CD8-positive, alpha-beta T cell (primary cell): ENCODE measurements at regions of chr11 and their contacts with region 1.

Region 1: GRCh38 chr11:19561011-19561410 is 151.6 kb upstream of the NAV2 start:
- DNase-seq: no peak
- ATAC-seq: no peak
- H3K4me3 ChIP-seq: no peak overlapping the region
- H3K4me3 Mint-ChIP-seq: no peak overlapping the region
- H3K27ac ChIP-seq: no peak overlapping the region
- H3K27ac Mint-ChIP-seq: no peak overlapping the region
- H3K4me1 ChIP-seq: no peaks in the 10 kb centered on the region
- H3K4me1 Mint-ChIP-seq: peaks cover 4% of the 10 kb centered on the region
- H3K27me3 ChIP-seq: no peaks in the 10 kb centered on the region
- H3K27me3 Mint-ChIP-seq: peaks cover 13% of the 10 kb centered on the region
- CTCF ChIP-seq: no peak

Region 2: GRCh38 chr11:19573666-19574065 is 12.7 kb after region 1 on chr11:
- CTCF ChIA-PET with region 1: interaction called, 26 read pairs
- POLR2A ChIA-PET with region 1: no interaction called
- intact Hi-C with region 1: no loop called
- DNase-seq: no peak
- ATAC-seq: no peak
- H3K4me3 ChIP-seq: no peak overlapping the region
- H3K4me3 Mint-ChIP-seq: no peak overlapping the region
- H3K27ac ChIP-seq: no peak overlapping the region
- H3K27ac Mint-ChIP-seq: no peak overlapping the region
- H3K4me1 ChIP-seq: no peaks in the 10 kb centered on the region
- H3K4me1 Mint-ChIP-seq: no peaks in the 10 kb centered on the region
- H3K27me3 ChIP-seq: peaks cover 0 to 3% of the 10 kb centered on the region in 2 experiments
- H3K27me3 Mint-ChIP-seq: peaks cover 8% of the 10 kb centered on the region
- CTCF ChIP-seq: no peak

Region 3: DNA sequence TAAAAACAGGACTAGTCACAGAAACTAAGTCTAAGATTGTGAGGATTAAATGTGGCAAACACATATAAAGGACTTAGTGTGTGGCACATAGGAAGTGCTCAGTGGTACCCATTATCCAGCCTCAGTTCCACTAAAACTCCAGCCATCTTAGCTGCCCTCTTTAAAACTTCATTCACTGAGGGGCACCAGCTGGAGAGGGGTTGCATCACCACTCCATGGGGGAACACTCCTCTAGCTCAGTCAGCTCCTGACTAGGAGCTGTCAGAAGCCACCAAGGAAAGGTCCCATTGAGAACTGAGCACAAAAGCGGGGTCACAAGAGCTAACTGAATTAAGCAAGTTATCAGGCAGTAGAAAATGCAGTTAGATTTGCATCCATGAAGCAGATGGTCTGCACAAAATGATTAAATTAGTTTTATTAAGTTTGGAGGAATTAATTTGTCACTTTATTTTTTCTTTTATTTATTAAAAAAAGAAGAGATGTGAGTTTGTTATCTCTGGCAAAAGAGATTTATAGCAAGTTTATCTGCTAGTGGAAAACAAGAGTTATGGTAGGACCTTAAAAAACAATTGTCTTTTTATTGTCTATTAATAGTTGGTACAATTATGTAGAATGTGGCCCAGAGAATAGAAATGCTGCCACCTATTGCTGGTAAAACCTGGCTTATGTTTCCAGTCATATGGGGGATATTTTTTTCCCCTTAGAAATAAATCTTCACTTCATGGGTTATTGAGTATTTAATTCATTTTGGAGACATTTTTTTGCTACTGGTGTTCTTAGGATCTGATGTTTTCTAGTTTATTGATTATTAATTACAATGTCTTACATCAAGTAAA is 247.3 kb after region 1 on chr11:
- CTCF ChIA-PET with region 1: interaction called, 3 read pairs
- POLR2A ChIA-PET with region 1: no interaction called
- intact Hi-C with region 1: loop called in 1 of 2 experiments (anchors 1 kb)
- DNase-seq: peak in 1 of 9 experiments; percentile 3
- ATAC-seq: no peak
- H3K4me3 ChIP-seq: no peak overlapping the region
- H3K4me3 Mint-ChIP-seq: no peak overlapping the region
- H3K27ac ChIP-seq: no peak overlapping the region
- H3K27ac Mint-ChIP-seq: no peak overlapping the region
- H3K4me1 ChIP-seq: no peaks in the 10 kb centered on the region
- H3K4me1 Mint-ChIP-seq: no peaks in the 10 kb centered on the region
- H3K27me3 ChIP-seq: no peaks in the 10 kb centered on the region
- H3K27me3 Mint-ChIP-seq: peaks cover 8% of the 10 kb centered on the region
- CTCF ChIP-seq: no peak